Activated CD4-positive, alpha-beta T cell treated with anti-CD3 and anti-CD28 coated beads for 36 hours (primary cell): ENCODE measurements at regions of chr1 and their contacts with region 1.

Region 1: GRCh38 chr1:217482356-217483102 is 148.4 kb downstream of the GPATCH2 start:
- DNase-seq: peak; percentile 83
- ATAC-seq: peak; percentile 100
- H3K4me3 Mint-ChIP-seq: no peak overlapping the region
- H3K27ac Mint-ChIP-seq: peak overlapping the region; percentile 74
- H3K4me1 Mint-ChIP-seq: peaks cover 25% of the 10 kb centered on the region
- H3K27me3 Mint-ChIP-seq: no peaks in the 10 kb centered on the region

Region 2: GRCh38 chr1:217469983-217470382 is 12.5 kb before region 1 on chr1:
- CTCF ChIA-PET with region 1: no interaction called
- POLR2A ChIA-PET with region 1: no interaction called
- intact Hi-C with region 1: no loop called
- DNase-seq: no peak
- ATAC-seq: no peak
- H3K4me3 Mint-ChIP-seq: no peak overlapping the region
- H3K27ac Mint-ChIP-seq: no peak overlapping the region
- H3K4me1 Mint-ChIP-seq: no peaks in the 10 kb centered on the region
- H3K27me3 Mint-ChIP-seq: no peaks in the 10 kb centered on the region

Region 3: DNA sequence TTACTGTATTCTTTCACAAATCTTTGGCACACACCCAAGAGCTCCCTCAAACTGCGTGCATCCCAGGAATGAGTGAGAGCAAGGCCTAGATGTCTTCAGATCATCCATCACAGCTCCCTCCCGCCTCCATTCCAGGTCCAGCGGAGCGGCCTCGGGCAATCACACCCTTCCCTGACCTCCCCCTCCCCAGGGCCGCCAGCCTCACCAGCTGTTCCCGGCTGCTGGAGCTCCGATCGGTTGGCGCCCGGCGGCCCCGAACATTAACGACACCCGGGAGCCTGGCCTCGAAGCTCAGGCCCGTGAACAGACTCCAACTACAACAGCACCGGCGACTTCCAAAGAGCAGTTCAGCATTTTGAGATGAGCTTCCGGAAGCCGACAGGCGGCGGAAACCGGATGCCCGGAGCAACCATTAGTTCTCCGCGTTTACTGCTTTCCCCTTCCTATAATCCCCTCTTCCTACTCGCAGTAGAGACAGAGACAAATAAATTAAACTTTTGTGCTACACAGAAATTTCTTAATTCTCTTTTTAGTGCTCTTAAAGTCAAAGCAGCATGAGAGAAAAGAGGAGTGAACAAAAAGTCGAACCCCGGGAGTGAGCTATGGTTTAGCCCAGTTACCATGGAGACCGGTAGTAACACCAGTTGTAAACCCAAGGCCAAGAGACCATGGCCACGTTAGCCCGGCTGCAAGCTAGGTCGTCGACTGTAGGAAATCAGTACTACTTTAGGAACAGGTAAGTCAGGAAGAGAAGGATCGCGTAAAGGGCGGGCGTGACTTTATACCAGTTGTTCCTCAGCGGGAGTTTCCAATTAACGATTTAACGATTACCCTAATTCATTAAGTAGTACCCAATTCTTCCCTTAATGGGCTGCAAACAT is 148.4 kb after region 1 on chr1 and contains the starts of genes GPATCH2 and SPATA17:
- CTCF ChIA-PET with region 1: no interaction called
- POLR2A ChIA-PET with region 1: interaction called, 4 read pairs
- intact Hi-C with region 1: loop called in 1 of 2 experiments (anchors 2 kb)
- DNase-seq: peak; percentile 85
- ATAC-seq: peak; percentile 89
- H3K4me3 Mint-ChIP-seq: peak within 1 kb of the TSS; percentile 87
- H3K27ac Mint-ChIP-seq: peak within 1 kb of the TSS; percentile 100
- H3K4me1 Mint-ChIP-seq: peaks cover 34% of the 10 kb centered on the region
- H3K27me3 Mint-ChIP-seq: no peaks in the 10 kb centered on the region
- total RNA-seq, gene GPATCH2: 6.4 to 7.2 TPM
- total RNA-seq, gene SPATA17: 0.14 TPM in 1 of 2 experiments, not detected in the other

Region 4: DNA sequence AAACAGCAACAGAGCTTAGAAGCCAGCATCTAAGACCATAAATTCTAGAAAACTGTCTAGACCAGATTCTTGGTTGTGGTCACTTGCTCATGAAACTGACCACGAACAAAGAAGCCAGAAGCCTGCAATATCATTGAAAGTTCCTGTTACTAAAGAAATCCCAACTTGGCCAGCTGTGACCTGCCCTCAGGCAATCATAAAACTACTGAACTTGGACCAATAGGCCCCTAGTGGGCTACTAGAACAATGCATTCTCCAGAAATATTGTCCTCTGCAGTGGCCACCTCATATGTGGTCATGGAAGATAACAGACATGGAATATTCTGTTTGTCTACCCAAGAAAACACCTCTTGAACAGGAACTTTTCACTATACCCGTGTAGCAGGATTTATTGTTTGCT is 236.4 kb after region 1 on chr1:
- CTCF ChIA-PET with region 1: no interaction called
- POLR2A ChIA-PET with region 1: no interaction called
- intact Hi-C with region 1: no loop called
- DNase-seq: no peak
- ATAC-seq: no peak
- H3K4me3 Mint-ChIP-seq: no peak overlapping the region
- H3K27ac Mint-ChIP-seq: no peak overlapping the region
- H3K4me1 Mint-ChIP-seq: no peaks in the 10 kb centered on the region
- H3K27me3 Mint-ChIP-seq: no peaks in the 10 kb centered on the region